ENCODE measurements at regions of chr2 and their contacts with region 1.

Region 1: DNA sequence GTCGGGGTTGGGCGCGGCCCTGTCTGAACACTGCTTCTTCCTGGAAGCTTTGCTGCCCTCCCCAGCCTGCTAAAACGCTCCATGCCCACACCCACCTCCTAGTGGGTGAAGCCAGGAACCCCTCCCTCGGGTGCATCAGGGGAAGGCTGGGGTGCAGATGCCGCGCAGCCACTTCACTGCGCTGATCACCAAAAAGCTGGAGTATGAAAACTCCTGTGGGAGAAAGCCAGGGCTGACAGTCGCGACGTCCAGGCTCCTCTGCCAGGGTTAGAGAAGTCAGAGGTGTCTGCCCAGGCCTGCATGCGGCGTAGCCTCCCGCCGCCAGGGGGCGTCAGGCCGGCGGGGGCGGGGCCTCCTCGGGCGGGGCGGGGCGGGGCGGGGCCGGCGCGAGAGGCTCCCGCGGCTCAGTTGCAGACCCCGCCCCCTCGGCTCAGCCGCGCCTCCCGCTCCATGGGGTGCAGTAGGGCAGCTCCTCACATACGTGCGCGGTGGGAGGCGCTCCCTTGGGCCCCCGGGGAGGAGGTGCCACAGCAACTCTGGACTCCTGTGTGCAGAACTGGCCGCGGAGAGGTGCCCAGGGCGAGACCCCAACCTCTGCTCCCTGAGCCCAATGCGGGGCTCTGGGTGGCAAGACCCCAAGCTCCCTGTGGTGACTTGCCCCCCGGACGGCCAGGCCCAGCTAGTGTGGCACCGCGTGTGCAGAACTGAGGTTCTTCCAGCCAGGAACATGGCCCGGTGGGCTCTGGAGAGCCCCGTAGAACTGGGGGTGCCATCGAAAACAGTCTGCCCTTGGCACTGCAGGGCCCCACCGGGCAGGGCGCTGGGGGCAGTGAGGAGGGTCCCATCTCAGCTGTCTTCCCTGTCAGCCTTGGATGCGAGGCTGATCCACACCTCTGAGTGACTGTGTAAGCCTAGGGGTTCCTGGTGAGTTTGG is 1.8 kb upstream of the RNPEPL1 start:
- DNase-seq: peak; percentile 89 to 97 (median 96)
- ATAC-seq: peak; percentile 62
- H3K4me3 ChIP-seq: peak overlapping the region; percentile 61 to 71
- H3K4me3 Mint-ChIP-seq: peak overlapping the region; percentile 94
- H3K27ac ChIP-seq: peak overlapping the region; percentile 79 to 93
- H3K27ac Mint-ChIP-seq: peak overlapping the region; percentile 99
- H3K4me1 ChIP-seq: peaks cover 85% of the 10 kb centered on the region
- H3K4me1 Mint-ChIP-seq: peaks cover 76% of the 10 kb centered on the region
- H3K27me3 ChIP-seq: no peaks in the 10 kb centered on the region
- H3K27me3 Mint-ChIP-seq: no peaks in the 10 kb centered on the region
- CTCF ChIP-seq: peak; percentile 87

Region 2: GRCh38 chr2:239814116-239814860 is 752.2 kb before region 1 on chr2:
- CTCF ChIA-PET with region 1: no interaction called
- POLR2A ChIA-PET with region 1: no interaction called
- intact Hi-C with region 1: no loop called
- DNase-seq: no peak
- ATAC-seq: no peak
- H3K4me3 ChIP-seq: no peak overlapping the region
- H3K4me3 Mint-ChIP-seq: no peak overlapping the region
- H3K27ac ChIP-seq: no peak overlapping the region
- H3K27ac Mint-ChIP-seq: no peak overlapping the region
- H3K4me1 ChIP-seq: no peaks in the 10 kb centered on the region
- H3K4me1 Mint-ChIP-seq: no peaks in the 10 kb centered on the region
- H3K27me3 ChIP-seq: no peaks in the 10 kb centered on the region
- H3K27me3 Mint-ChIP-seq: peaks cover 2% of the 10 kb centered on the region
- CTCF ChIP-seq: no peak

Region 3: DNA sequence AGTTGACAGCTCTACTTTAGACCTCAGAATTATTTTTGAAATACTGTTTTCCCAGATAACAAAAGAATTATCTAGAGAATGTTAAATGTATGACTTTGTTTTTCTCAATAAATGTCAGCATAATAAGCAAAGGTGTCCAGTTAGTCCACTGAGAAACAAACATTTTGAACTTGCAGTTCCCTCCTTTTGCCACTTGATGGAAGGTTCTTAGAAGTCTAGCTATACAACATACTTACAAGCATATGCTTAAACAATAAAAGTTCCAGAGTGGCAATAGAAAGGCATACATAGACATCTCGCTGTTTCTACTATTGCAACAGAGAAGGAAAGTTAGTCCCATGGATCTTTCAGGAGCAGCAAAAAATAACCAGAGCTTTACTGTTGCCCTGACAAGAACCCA is 553.1 kb before region 1 on chr2:
- CTCF ChIA-PET with region 1: no interaction called
- POLR2A ChIA-PET with region 1: no interaction called
- intact Hi-C with region 1: no loop called
- DNase-seq: no peak
- ATAC-seq: no peak
- H3K4me3 ChIP-seq: no peak overlapping the region
- H3K4me3 Mint-ChIP-seq: no peak overlapping the region
- H3K27ac ChIP-seq: no peak overlapping the region
- H3K27ac Mint-ChIP-seq: no peak overlapping the region
- H3K4me1 ChIP-seq: no peaks in the 10 kb centered on the region
- H3K4me1 Mint-ChIP-seq: no peaks in the 10 kb centered on the region
- H3K27me3 ChIP-seq: no peaks in the 10 kb centered on the region
- H3K27me3 Mint-ChIP-seq: no peaks in the 10 kb centered on the region
- CTCF ChIP-seq: no peak

Region 4: GRCh38 chr2:240513549-240514287 is 52.8 kb before region 1 on chr2:
- CTCF ChIA-PET with region 1: interaction called, 21 read pairs
- POLR2A ChIA-PET with region 1: interaction called, 3 read pairs
- intact Hi-C with region 1: loop called in 1 of 2 experiments (anchors 1 kb)
- DNase-seq: peak; percentile 69 to 90 (median 86)
- ATAC-seq: peak; percentile 99
- H3K4me3 ChIP-seq: no peak overlapping the region
- H3K4me3 Mint-ChIP-seq: no peak overlapping the region
- H3K27ac ChIP-seq: peak overlapping the region in 1 of 2 experiments; percentile 12
- H3K27ac Mint-ChIP-seq: peak overlapping the region; percentile 76
- H3K4me1 ChIP-seq: no peaks in the 10 kb centered on the region
- H3K4me1 Mint-ChIP-seq: peaks cover 7% of the 10 kb centered on the region
- H3K27me3 ChIP-seq: no peaks in the 10 kb centered on the region
- H3K27me3 Mint-ChIP-seq: no peaks in the 10 kb centered on the region
- CTCF ChIP-seq: peak; percentile 85

Region 5: GRCh38 chr2:240579771-240580614 is 13.5 kb after region 1 on chr2:
- CTCF ChIA-PET with region 1: interaction called, 37 read pairs
- POLR2A ChIA-PET with region 1: interaction called, 88 read pairs
- intact Hi-C with region 1: loop called in 1 of 2 experiments (anchors 1 kb)
- DNase-seq: peak; percentile 53 to 89 (median 80)
- ATAC-seq: peak; percentile 94
- H3K4me3 ChIP-seq: no peak overlapping the region
- H3K4me3 Mint-ChIP-seq: peak overlapping the region; percentile 21
- H3K27ac ChIP-seq: peak overlapping the region in 1 of 2 experiments; percentile 55
- H3K27ac Mint-ChIP-seq: peak overlapping the region; percentile 86
- H3K4me1 ChIP-seq: peaks cover 30% of the 10 kb centered on the region
- H3K4me1 Mint-ChIP-seq: peaks cover 43% of the 10 kb centered on the region
- H3K27me3 ChIP-seq: no peaks in the 10 kb centered on the region
- H3K27me3 Mint-ChIP-seq: no peaks in the 10 kb centered on the region
- CTCF ChIP-seq: peak; percentile 64

Region 6: DNA sequence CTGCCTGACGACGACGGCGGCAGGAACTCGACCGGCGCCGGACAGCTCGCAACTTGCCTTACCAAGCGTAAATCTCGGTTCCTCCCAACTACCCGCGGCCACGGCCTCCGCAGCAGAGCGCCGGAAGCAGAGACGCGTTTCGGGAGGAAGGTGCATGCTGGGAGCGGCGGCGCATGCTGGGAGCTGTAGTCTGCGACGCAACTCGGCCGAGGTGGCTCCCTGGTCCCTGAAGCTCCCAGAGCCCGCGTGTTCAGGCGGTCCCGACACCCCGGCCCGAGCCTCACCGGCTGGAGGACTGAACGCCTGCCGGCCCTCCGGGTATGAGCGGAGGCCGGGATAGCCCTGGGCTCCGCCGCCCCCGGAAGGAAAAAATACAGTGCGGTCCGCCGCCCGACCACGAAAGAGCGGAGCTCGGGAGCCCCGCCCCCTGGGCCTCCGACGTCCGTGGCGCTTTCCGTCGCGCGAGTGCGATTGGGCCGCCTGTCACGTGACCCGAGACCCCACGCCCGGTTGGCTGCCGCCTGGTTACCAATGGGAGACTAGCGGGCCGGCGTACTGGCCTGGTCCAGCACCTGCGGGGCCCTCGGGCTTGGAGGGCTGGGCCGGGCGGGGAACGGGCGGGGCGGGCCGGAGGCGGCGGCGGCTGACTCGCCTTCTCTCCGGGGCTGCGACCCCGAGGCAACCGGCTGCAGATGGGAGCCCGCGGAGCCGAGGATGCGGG is 19.9 kb after region 1 on chr2 and contains the start of gene CAPN10:
- CTCF ChIA-PET with region 1: interaction called, 37 read pairs
- POLR2A ChIA-PET with region 1: interaction called, 88 read pairs
- intact Hi-C with region 1: loop called (anchors 1 kb)
- DNase-seq: peak; percentile 92 to 98 (median 97)
- ATAC-seq: peak; percentile 80
- H3K4me3 ChIP-seq: peak within 1 kb of the TSS; percentile 82 to 95
- H3K4me3 Mint-ChIP-seq: peak within 1 kb of the TSS; percentile 88
- H3K27ac ChIP-seq: peak within 1 kb of the TSS; percentile 86 to 90
- H3K27ac Mint-ChIP-seq: peak within 1 kb of the TSS; percentile 94
- H3K4me1 ChIP-seq: peaks cover 37% of the 10 kb centered on the region
- H3K4me1 Mint-ChIP-seq: peaks cover 57% of the 10 kb centered on the region
- H3K27me3 ChIP-seq: no peaks in the 10 kb centered on the region
- H3K27me3 Mint-ChIP-seq: no peaks in the 10 kb centered on the region
- CTCF ChIP-seq: no peak
- total RNA-seq, gene CAPN10: 65.9 to 68.9 TPM

Region 7: GRCh38 chr2:240619506-240620148 is 53.2 kb after region 1 on chr2:
- CTCF ChIA-PET with region 1: interaction called, 27 read pairs
- POLR2A ChIA-PET with region 1: interaction called, 12 read pairs
- intact Hi-C with region 1: loop called (anchors 1 to 5 kb)
- DNase-seq: no peak
- ATAC-seq: no peak
- H3K4me3 ChIP-seq: no peak overlapping the region
- H3K4me3 Mint-ChIP-seq: no peak overlapping the region
- H3K27ac ChIP-seq: peak overlapping the region in 1 of 2 experiments; percentile 73
- H3K27ac Mint-ChIP-seq: peak overlapping the region; percentile 78
- H3K4me1 ChIP-seq: peaks cover 45% of the 10 kb centered on the region
- H3K4me1 Mint-ChIP-seq: peaks cover 38% of the 10 kb centered on the region
- H3K27me3 ChIP-seq: no peaks in the 10 kb centered on the region
- H3K27me3 Mint-ChIP-seq: no peaks in the 10 kb centered on the region
- CTCF ChIP-seq: no peak

Region 8: GRCh38 chr2:240624950-240625621 is 58.6 kb after region 1 on chr2 and contains the start of gene GPR35:
- CTCF ChIA-PET with region 1: interaction called, 27 read pairs
- POLR2A ChIA-PET with region 1: interaction called, 12 read pairs
- intact Hi-C with region 1: loop called (anchors 1 to 5 kb)
- DNase-seq: peak; percentile 46 to 97 (median 75)
- ATAC-seq: peak; percentile 70
- H3K4me3 ChIP-seq: peak within 1 kb of the TSS; percentile 15 to 43
- H3K4me3 Mint-ChIP-seq: peak within 1 kb of the TSS; percentile 62
- H3K27ac ChIP-seq: peak within 1 kb of the TSS; percentile 40 to 74
- H3K27ac Mint-ChIP-seq: peak within 1 kb of the TSS; percentile 91
- H3K4me1 ChIP-seq: peaks cover 70% of the 10 kb centered on the region
- H3K4me1 Mint-ChIP-seq: peaks cover 53% of the 10 kb centered on the region
- H3K27me3 ChIP-seq: no peaks in the 10 kb centered on the region
- H3K27me3 Mint-ChIP-seq: no peaks in the 10 kb centered on the region
- CTCF ChIP-seq: no peak
- total RNA-seq, gene GPR35: 17.5 to 18.7 TPM

Region 9: GRCh38 chr2:240913810-240914644 is 347.6 kb after region 1 on chr2:
- CTCF ChIA-PET with region 1: no interaction called
- POLR2A ChIA-PET with region 1: no interaction called
- intact Hi-C with region 1: no loop called
- DNase-seq: peak; percentile 31 to 83 (median 60)
- ATAC-seq: peak; percentile 67
- H3K4me3 ChIP-seq: no peak overlapping the region
- H3K4me3 Mint-ChIP-seq: no peak overlapping the region
- H3K27ac ChIP-seq: no peak overlapping the region
- H3K27ac Mint-ChIP-seq: no peak overlapping the region
- H3K4me1 ChIP-seq: no peaks in the 10 kb centered on the region
- H3K4me1 Mint-ChIP-seq: no peaks in the 10 kb centered on the region
- H3K27me3 ChIP-seq: peaks cover 6 to 8% of the 10 kb centered on the region in 2 experiments
- H3K27me3 Mint-ChIP-seq: peaks cover 11% of the 10 kb centered on the region
- CTCF ChIP-seq: peak; percentile 87

Region 10: DNA sequence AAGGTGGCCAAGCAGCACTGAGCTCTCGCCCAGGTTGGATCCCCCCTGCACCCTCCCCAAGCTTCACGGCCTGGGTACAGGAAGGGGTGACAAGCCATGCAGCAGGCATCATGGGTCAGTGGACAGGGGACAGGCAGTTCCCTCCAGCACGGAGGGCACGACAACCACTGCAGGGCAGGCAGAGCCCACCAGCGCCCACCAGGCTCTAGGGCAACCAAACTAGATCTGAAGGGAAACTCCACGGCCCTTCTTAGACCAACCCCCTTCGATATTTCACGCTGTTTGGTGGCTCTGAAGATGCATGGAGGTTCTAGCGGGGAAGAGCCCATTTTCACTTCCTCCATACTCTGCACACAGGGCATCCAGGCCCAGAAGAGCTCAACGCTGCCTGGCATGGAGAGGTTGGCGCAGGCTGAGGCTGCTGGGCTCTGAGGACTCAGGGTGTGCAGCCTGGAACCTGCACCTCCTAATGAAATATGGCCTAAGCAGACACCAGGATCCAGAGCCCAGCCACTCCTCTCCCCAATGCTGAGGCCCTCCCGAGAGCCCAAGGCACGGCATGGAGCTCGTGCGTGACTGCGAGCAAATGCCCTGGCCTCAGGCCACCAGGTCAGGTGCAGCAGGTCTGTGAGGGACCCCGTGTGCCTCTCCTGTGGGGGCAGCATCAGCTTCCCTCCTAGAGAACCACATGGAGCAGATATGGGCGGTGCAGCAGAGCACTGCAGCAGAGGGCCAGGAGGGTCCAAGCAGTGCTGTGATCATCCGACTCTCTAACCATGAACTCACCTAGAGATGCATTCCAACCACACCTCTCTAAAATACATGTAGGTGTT is 544.4 kb after region 1 on chr2:
- CTCF ChIA-PET with region 1: no interaction called
- POLR2A ChIA-PET with region 1: interaction called, 3 read pairs
- intact Hi-C with region 1: loop called (anchors 5 to 10 kb)
- DNase-seq: peak in 4 of 9 experiments; percentile 41 to 73 (median 56)
- ATAC-seq: peak; percentile 33
- H3K4me3 ChIP-seq: peak overlapping the region; percentile 58 to 67
- H3K4me3 Mint-ChIP-seq: peak overlapping the region; percentile 97
- H3K27ac ChIP-seq: peak overlapping the region; percentile 63 to 94
- H3K27ac Mint-ChIP-seq: peak overlapping the region; percentile 98
- H3K4me1 ChIP-seq: peaks cover 61% of the 10 kb centered on the region
- H3K4me1 Mint-ChIP-seq: peaks cover 65% of the 10 kb centered on the region
- H3K27me3 ChIP-seq: no peaks in the 10 kb centered on the region
- H3K27me3 Mint-ChIP-seq: no peaks in the 10 kb centered on the region
- CTCF ChIP-seq: no peak

Region 11: GRCh38 chr2:241482176-241482955 is 915.9 kb after region 1 on chr2:
- CTCF ChIA-PET with region 1: no interaction called
- POLR2A ChIA-PET with region 1: no interaction called
- intact Hi-C with region 1: no loop called
- DNase-seq: no peak
- ATAC-seq: no peak
- H3K4me3 ChIP-seq: no peak overlapping the region
- H3K4me3 Mint-ChIP-seq: no peak overlapping the region
- H3K27ac ChIP-seq: no peak overlapping the region
- H3K27ac Mint-ChIP-seq: no peak overlapping the region
- H3K4me1 ChIP-seq: no peaks in the 10 kb centered on the region
- H3K4me1 Mint-ChIP-seq: no peaks in the 10 kb centered on the region
- H3K27me3 ChIP-seq: no peaks in the 10 kb centered on the region
- H3K27me3 Mint-ChIP-seq: no peaks in the 10 kb centered on the region
- CTCF ChIP-seq: no peak

Measured in CD8-positive, alpha-beta T cell (primary cell).